Psoas muscle (tissue), 8 donors: ENCODE measurements at regions of chr11 and their contacts with region 1.

Region 1: GRCh38 chr11:975827-976226 is 50.2 kb downstream of the AP2A2 start:
- DNase-seq: no peak
- ATAC-seq: no peak
- H3K4me3 ChIP-seq: no peak overlapping the region
- H3K27ac ChIP-seq: no peak overlapping the region
- H3K4me1 ChIP-seq: peaks cover 39% of the 10 kb centered on the region
- H3K27me3 ChIP-seq: no peaks in the 10 kb centered on the region
- CTCF ChIP-seq: no peak

Region 2: GRCh38 chr11:848380-848931 is 127.4 kb before region 1 on chr11:
- intact Hi-C with region 1: loop called in 1 of 2 experiments (anchors 2 kb)
- DNase-seq: no peak
- ATAC-seq: peak; percentile 36 to 56 (median 54)
- H3K4me3 ChIP-seq: no peak overlapping the region
- H3K27ac ChIP-seq: no peak overlapping the region
- H3K4me1 ChIP-seq: peaks cover 28% of the 10 kb centered on the region
- H3K27me3 ChIP-seq: peaks cover 0 to 11% (median 0%) of the 10 kb centered on the region in 3 donors
- CTCF ChIP-seq: peak; percentile 89

Region 3: GRCh38 chr11:910589-911195 is 65.1 kb before region 1 on chr11 and contains the start of gene CHID1:
- intact Hi-C with region 1: loop called in 1 of 2 experiments (anchors 5 kb)
- DNase-seq: peak; percentile 87 to 94
- ATAC-seq: peak; percentile 94 to 97 (median 95)
- H3K4me3 ChIP-seq: peak within 1 kb of the TSS; percentile 72
- H3K27ac ChIP-seq: peak within 1 kb of the TSS; percentile 82
- H3K4me1 ChIP-seq: peaks cover 15% of the 10 kb centered on the region
- H3K27me3 ChIP-seq: no peaks in the 10 kb centered on the region
- CTCF ChIP-seq: no peak
- total RNA-seq, gene CHID1: 31.2 to 44.5 (median 34.7) TPM

Region 4: GRCh38 chr11:925496-926321 is 50.1 kb before region 1 on chr11 and contains the start of gene AP2A2:
- intact Hi-C with region 1: loop called (anchors 5 kb)
- DNase-seq: peak; percentile 95
- ATAC-seq: peak; percentile 93 to 96 (median 94)
- H3K4me3 ChIP-seq: peak within 1 kb of the TSS; percentile 80
- H3K27ac ChIP-seq: peak within 1 kb of the TSS; percentile 86
- H3K4me1 ChIP-seq: peaks cover 23% of the 10 kb centered on the region
- H3K27me3 ChIP-seq: no peaks in the 10 kb centered on the region
- CTCF ChIP-seq: peak; percentile 83
- total RNA-seq, gene AP2A2: 26.5 to 31.4 (median 27.7) TPM

Region 5: DNA sequence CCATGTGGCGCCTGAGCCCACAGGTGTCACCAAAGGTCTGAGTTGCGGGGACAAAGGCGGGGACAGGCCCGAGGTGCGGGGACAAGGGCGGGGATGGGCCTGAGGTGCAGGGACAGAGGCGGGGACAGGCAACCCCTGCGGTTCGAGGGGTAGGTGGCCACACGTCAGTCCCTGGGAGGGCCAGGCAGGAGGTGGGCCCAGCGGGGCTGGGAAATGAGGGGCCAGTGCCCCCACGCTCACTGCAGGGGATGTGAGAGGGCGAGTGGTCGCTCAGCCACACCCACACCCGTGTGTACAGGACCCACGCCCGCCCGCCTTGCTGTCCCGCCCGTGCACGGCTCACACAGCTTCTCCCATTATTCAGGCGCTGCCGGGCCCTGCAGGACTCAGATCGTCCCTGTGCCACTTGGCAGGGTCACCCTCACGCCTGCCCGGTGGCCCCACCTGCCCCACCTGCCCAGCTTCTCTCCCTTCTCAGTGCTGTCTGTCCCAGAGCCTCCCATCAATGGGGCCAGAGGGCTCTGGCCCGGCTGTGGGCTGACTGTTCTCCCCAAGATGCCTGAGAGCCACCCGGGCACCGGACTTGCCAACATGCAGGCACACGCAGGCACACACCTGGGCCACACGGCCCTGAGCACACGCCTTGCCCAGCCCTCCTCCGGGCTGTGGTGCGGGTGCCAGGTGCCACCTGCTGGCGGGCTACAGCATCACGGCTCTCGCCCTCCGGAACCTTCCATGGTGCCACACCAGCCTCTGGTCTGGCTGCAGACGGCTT is 74.9 kb after region 1 on chr11:
- intact Hi-C with region 1: loop called in 1 of 2 experiments (anchors 5 kb)
- DNase-seq: peak; percentile 52 to 81
- ATAC-seq: peak; percentile 92 to 99 (median 96)
- H3K4me3 ChIP-seq: no peak overlapping the region
- H3K27ac ChIP-seq: no peak overlapping the region
- H3K4me1 ChIP-seq: no peaks in the 10 kb centered on the region
- H3K27me3 ChIP-seq: peaks cover 0 to 24% (median 16%) of the 10 kb centered on the region in 3 donors
- CTCF ChIP-seq: peak; percentile 87